Gastrocnemius medialis (tissue), 4 donors: ENCODE measurements at regions of chr19 and their contacts with region 1.

Region 1: GRCh38 chr19:7919610-7920518 is at the start of gene SNAPC2:
- DNase-seq: peak; percentile 88 to 93
- ATAC-seq: peak; percentile 82 to 85
- H3K4me3 ChIP-seq: peak within 1 kb of the TSS; percentile 67 to 95 (median 80)
- H3K27ac ChIP-seq: peak within 1 kb of the TSS; percentile 80 to 95 (median 93)
- H3K4me1 ChIP-seq: peaks cover 21 to 38% of the 10 kb centered on the region in 2 donors
- H3K27me3 ChIP-seq: peaks cover 35 to 48% (median 41%) of the 10 kb centered on the region in 3 donors
- CTCF ChIP-seq: no peak
- POLR2A ChIP-seq: peak; percentile 44 to 53
- total RNA-seq, gene SNAPC2: 4.6 to 10.9 (median 7.1) TPM

Region 2: DNA sequence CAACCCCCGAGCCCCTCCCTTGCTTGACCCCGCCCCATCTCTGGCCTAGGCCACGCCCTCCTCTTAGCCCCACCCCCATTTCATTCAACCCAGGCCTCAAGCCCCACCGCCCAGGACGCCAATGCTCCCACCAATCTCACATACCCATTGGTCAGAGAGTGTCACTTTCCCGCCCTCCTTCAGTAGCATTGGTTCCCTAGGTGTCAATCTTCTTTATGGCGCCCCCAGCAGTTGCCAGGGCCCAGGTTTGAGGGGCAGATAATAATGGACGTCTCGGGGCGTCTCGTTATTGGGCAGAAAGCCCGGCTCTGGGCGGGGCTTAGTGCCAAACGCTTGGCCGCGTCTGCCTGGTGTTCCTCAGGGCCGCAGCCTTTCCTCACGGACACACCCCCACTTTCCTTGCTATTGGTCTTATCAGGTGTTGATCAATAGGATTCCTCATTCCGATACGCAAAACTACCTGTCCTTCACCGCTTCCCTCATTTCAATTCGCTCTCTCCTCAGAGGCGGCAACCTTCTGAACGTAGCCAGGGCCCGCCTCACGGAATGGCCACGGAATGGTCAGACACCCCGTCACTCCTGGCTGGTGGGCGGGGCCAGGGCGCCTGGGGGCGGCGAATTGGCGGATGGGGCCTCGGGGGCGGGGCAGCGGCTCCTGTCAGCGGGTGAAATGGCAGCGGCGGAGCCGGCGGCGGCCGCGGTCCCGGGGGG is 90.1 kb before region 1 on chr19 and contains the start of gene EVI5L:
- in situ Hi-C with region 1: no loop called
- intact Hi-C with region 1: loop called (anchors 1 kb)
- DNase-seq: peak; percentile 98 to 99
- ATAC-seq: peak; percentile 96 to 98
- H3K4me3 ChIP-seq: peak within 1 kb of the TSS; percentile 70 to 83 (median 74)
- H3K27ac ChIP-seq: peak within 1 kb of the TSS; percentile 51 to 73 (median 61)
- H3K4me1 ChIP-seq: peaks cover 14 to 16% of the 10 kb centered on the region in 2 donors
- H3K27me3 ChIP-seq: peaks cover 0 to 9% (median 4%) of the 10 kb centered on the region in 3 donors
- CTCF ChIP-seq: no peak
- POLR2A ChIP-seq: no peak
- total RNA-seq, gene EVI5L: 17.5 to 24.6 (median 20.4) TPM

Region 3: DNA sequence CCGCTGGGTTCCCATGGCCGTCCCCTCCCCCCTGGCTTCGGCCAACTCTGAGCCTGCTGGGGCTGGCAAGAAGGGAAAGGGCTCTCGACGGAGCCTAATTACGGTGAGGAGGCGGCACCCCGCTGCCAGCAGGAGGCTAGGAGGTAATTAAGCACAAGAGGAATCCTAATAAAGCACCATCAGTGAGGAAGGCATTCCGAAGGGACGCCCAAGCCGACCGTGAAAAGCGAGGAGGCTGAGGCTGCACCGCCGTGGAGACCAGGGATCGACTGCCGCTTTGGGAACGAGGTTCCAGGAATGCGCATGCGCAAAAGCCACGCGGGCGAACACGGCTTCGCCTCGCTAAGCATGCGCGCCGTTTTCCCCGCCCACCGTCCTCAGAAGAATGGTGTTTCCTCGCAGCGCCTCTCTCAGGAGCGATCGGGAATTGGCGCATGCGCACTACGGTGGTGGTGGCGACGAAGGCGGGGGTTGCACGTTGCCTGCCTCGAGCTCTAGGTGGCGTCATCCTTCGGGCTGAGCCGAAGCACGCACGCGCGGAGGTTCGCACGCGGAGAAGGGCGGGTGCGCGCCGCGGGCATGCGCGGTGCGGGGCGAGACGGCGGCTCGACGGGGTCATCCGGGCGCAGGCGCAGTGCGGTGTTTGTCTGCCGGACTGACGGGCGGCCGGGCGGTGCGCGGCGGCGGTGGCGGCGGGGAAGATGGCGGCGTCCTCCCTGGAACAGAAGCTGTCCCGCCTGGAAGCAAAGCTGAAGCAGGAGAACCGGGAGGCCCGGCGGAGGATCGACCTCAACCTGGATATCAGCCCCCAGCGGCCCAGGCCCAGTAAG is 16.4 kb before region 1 on chr19 and contains the start of gene MAP2K7:
- in situ Hi-C with region 1: no loop called
- intact Hi-C with region 1: loop called (anchors 1 kb)
- DNase-seq: peak; percentile 99 to 100
- ATAC-seq: peak; percentile 95 to 97
- H3K4me3 ChIP-seq: peak within 1 kb of the TSS; percentile 82 to 97 (median 90)
- H3K27ac ChIP-seq: peak within 1 kb of the TSS; percentile 86 to 92 (median 90)
- H3K4me1 ChIP-seq: peaks cover 22 to 37% of the 10 kb centered on the region in 2 donors
- H3K27me3 ChIP-seq: no peaks in the 10 kb centered on the region
- CTCF ChIP-seq: peak in 4 of 5 experiments; percentile 22 to 55 (median 38)
- POLR2A ChIP-seq: peak; percentile 84 to 86
- total RNA-seq, gene MAP2K7: 17.7 to 41.7 (median 32.9) TPM

Region 4: DNA sequence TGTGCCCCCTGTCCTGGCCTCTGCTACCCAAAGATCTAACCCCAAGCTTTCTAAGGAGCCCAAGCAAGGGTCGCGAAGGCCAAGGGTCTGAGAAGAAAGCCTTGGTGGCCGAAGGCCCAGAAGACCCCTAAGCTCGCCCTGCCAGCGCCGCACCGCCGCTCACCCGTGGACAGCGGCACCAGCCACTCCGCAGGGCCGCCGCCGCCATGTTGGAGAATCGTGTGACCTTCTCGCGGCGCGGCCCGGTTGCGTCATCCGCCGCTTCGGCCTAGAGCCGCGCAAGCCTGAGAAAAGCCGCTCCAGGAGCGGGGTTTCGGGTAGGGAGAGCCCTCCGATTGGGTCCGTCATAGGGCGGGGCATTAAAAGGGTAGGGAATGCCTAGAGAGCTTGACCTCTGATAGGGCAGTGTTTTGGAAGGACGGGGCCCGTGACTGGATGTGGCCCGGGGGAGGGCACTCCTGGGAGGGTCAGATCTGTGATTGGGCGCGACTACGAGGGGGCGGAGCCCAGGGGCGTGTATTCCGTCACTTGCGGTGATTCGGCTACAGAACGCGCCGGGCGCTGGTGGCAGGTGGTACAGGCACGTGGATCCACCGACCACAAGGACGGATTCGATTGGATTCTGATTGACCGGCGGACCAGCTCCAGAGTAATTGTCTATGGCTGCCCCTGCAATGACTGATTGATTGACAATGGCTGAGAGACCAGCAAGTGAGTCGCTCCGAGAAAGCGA is 23.7 kb after region 1 on chr19 and contains the start of gene TIMM44:
- in situ Hi-C with region 1: no loop called
- intact Hi-C with region 1: loop called (anchors 1 kb)
- DNase-seq: peak; percentile 100
- ATAC-seq: peak; percentile 97 to 98
- H3K4me3 ChIP-seq: peak within 1 kb of the TSS; percentile 67 to 97 (median 82)
- H3K27ac ChIP-seq: peak within 1 kb of the TSS; percentile 94 to 100 (median 98)
- H3K4me1 ChIP-seq: peaks cover 10 to 19% of the 10 kb centered on the region in 2 donors
- H3K27me3 ChIP-seq: no peaks in the 10 kb centered on the region
- CTCF ChIP-seq: no peak
- POLR2A ChIP-seq: peak; percentile 92 to 97
- total RNA-seq, gene TIMM44: 53.9 to 168 (median 94.1) TPM